Sigmoid colon (tissue), 7 donors: ENCODE measurements at regions of chr7 and their contacts with region 1.

Region 1: DNA sequence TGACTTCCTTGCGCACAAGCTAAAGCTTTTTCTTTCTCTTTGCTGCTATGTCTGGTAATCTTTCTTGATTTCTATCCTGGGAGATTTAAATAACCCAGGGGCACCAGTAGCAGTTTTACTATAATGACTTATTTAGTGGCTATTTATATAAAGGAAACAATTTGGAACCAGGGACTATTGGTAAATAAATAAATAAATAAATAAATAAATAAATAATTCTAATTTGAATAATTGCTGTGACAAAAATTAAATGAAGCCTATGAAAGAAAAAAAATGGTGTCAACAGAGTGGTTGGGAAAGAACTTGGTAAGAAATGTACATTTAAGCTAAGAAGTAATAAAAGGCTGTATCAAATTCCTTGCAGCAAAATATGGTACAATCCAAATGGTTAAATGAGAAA is 110.7 kb upstream of the MAGI2 start:
- DNase-seq: no peak
- H3K4me3 ChIP-seq: no peak overlapping the region
- H3K27ac ChIP-seq: no peak overlapping the region
- H3K4me1 ChIP-seq: no peaks in the 10 kb centered on the region
- H3K27me3 ChIP-seq: no peaks in the 10 kb centered on the region
- CTCF ChIP-seq: no peak
- EP300 ChIP-seq: no peak
- POLR2A ChIP-seq: no peak

Region 2: DNA sequence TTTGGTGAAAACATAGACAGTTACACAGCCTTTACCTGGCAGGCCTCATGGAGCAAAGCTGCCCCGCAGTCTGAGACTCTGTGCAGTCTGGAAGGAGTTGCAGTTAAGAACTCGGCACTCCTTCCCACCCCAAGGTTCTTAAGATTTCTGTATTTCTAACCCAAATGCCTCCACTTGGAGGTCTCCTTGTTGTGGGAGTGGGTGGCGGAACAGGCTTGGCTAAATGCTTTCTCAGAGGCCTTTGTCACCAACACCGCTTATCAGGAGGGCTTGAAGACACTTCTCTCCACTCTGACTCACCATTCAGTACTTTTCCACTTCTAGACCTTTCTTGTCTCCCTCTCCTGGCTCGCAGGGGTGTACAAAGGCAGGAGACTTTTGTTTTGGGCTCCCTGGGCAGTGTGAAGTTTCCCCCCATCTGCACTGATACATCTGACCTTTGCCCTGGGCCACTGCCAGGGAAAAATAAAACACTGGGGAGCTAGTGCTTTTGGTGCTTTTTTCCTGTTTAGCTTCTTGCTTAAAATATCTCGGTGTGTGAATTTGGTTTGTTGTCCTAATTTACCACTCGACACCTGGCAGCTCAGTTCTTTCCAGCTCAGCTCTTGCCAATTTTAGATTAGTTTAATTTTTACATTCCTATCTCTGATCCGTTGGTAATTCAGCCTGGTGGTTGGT is 59.3 kb before region 1 on chr7:
- intact Hi-C with region 1: loop called (anchors 10 kb)
- DNase-seq: no peak
- H3K4me3 ChIP-seq: no peak overlapping the region
- H3K27ac ChIP-seq: peak overlapping the region in 1 of 4 donors; percentile 28
- H3K4me1 ChIP-seq: peaks cover 0 to 4% (median 0%) of the 10 kb centered on the region in 4 donors
- H3K27me3 ChIP-seq: no peaks in the 10 kb centered on the region
- CTCF ChIP-seq: no peak
- EP300 ChIP-seq: no peak
- POLR2A ChIP-seq: no peak

Region 3: GRCh38 chr7:79761876-79762429 is 197.8 kb after region 1 on chr7:
- intact Hi-C with region 1: no loop called
- DNase-seq: no peak
- H3K4me3 ChIP-seq: no peak overlapping the region
- H3K27ac ChIP-seq: no peak overlapping the region
- H3K4me1 ChIP-seq: no peaks in the 10 kb centered on the region
- H3K27me3 ChIP-seq: no peaks in the 10 kb centered on the region
- CTCF ChIP-seq: no peak
- EP300 ChIP-seq: no peak
- POLR2A ChIP-seq: no peak